ENCODE measurements at regions of chr2 and their contacts with region 1.

Region 1: DNA sequence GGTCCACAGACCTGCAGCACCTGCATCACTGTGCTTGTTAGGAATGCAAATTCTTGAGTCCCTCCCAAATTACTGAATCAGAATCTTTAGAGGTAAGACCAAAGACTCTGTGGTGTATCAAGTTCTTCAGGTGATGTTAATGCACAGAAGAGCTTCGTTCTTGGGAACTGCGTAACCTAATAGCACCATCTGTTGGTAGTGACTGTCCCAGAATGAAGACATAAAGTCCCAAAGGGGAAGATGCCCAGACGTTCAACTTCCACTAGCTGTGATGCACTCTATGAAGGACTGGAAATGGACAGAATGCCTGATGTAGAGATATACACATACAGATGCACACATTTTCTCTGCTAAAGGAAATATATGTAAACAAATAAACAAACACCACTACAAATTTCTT is 576.0 kb downstream of the LRP1B start:
- DNase-seq: peak; percentile 69
- ATAC-seq: peak; percentile 63
- H3K4me3 ChIP-seq: no peak overlapping the region
- H3K27ac ChIP-seq: no peak overlapping the region
- H3K4me1 ChIP-seq: peaks cover 12% of the 10 kb centered on the region
- H3K27me3 ChIP-seq: no peaks in the 10 kb centered on the region
- CTCF ChIP-seq: peak; percentile 79

Region 2: DNA sequence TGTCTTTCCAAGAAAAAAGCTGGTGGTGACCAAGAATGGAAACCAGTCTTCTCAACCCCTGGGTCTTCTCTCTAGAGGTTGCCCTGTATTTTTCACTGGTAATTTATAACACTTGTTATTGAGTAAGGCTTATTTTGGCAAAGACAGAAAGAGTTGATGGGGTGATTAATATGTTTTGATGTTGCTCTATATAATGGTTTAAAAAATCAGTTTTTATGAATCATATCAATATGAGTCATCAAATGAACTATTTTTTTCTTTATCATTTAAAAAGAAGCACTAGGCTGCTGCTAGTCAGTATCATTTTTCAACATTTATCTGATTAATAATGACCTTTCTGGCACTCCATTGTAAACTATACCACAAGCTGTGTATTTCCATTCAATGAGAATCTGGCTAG is 566.2 kb before region 1 on chr2:
- CTCF ChIA-PET with region 1: no interaction called
- POLR2A ChIA-PET with region 1: no interaction called
- intact Hi-C with region 1: loop called (anchors 10 kb)
- DNase-seq: peak; percentile 6
- ATAC-seq: no peak
- H3K4me3 ChIP-seq: no peak overlapping the region
- H3K27ac ChIP-seq: no peak overlapping the region
- H3K4me1 ChIP-seq: 0 out of 2 replicates have a peak, but pooled peaks cover 6% of the 10 kb centered on the region
- H3K27me3 ChIP-seq: no peaks in the 10 kb centered on the region
- CTCF ChIP-seq: no peak

Region 3: DNA sequence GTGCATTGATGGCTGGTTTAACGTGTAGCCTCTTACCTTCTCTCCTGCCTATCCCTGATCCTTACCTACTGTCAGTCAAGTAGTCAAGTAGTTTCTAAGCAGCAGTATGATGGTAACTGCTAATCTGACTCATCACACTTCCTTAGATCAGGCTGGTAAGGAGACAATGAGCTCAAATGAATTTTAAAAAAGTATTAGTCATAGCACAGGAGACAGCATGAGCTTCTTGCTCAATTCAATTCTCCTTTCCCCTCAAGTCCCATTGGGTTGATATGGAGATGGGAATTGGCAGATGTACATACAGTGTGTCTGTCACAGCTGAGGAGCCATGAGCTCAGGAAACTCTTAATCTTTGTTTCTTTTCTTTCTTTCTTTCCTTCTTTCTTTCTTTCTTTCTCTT is 223.7 kb before region 1 on chr2:
- CTCF ChIA-PET with region 1: no interaction called
- POLR2A ChIA-PET with region 1: no interaction called
- intact Hi-C with region 1: loop called (anchors 10 kb)
- DNase-seq: peak; percentile 78
- ATAC-seq: peak; percentile 94
- H3K4me3 ChIP-seq: no peak overlapping the region
- H3K27ac ChIP-seq: no peak overlapping the region
- H3K4me1 ChIP-seq: peaks cover 20% of the 10 kb centered on the region
- H3K27me3 ChIP-seq: no peaks in the 10 kb centered on the region
- CTCF ChIP-seq: no peak

Region 4: DNA sequence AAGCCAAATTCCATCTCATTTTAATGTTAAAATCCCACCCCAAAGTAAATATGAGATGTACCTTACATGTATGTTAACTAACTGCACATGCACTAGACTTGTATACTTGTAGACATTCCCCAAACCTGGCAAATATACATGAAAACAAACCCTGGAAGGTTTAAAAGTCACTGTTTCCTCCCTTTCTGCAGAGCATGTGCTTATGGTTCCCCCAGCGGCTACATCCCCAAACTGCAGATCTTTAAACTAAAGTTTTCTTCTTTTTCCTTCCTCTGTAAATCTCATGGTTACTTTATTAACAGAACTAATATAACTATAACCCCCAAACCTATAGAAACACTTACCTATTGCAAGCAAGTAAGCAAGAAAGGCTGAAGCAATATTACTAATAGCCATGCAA is 155.5 kb before region 1 on chr2:
- CTCF ChIA-PET with region 1: no interaction called
- POLR2A ChIA-PET with region 1: no interaction called
- intact Hi-C with region 1: loop called (anchors 1 kb)
- DNase-seq: peak; percentile 57
- ATAC-seq: no peak
- H3K4me3 ChIP-seq: no peak overlapping the region
- H3K27ac ChIP-seq: no peak overlapping the region
- H3K4me1 ChIP-seq: no peaks in the 10 kb centered on the region
- H3K27me3 ChIP-seq: no peaks in the 10 kb centered on the region
- CTCF ChIP-seq: peak; percentile 82

Region 5: GRCh38 chr2:141595316-141595920 is 40.6 kb after region 1 on chr2:
- CTCF ChIA-PET with region 1: no interaction called
- POLR2A ChIA-PET with region 1: no interaction called
- intact Hi-C with region 1: no loop called
- DNase-seq: no peak
- ATAC-seq: peak; percentile 61; the same call in 1 of the 2 replicates
- H3K4me3 ChIP-seq: no peak overlapping the region
- H3K27ac ChIP-seq: no peak overlapping the region
- H3K4me1 ChIP-seq: no peaks in the 10 kb centered on the region
- H3K27me3 ChIP-seq: no peaks in the 10 kb centered on the region
- CTCF ChIP-seq: no peak

Region 6: DNA sequence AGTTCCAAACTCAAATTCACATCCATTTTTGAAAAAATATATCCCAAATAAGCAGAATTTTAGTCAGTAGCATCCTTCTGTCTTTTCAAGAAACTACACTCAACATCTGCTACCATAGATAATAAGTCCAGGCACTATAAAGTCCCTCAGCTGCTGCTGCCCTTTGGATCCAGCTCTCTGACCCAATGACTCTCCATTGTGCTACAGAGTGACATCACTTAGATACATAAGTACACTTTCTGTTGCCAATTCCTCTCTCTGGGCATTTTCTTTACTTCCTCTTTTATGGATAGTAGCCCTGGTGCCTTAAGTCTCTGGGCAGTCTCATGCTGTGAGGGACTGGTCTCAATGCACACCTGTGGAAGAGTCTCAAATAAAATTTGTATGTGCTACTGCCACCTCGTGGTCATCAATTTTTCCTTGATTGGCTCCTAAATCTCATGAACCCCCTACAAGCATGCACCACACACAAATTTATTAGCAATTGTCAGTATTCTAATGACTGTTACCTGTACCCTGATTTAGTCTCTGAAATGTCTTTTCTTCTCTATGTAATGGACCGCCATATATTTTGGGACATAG is 356.8 kb after region 1 on chr2:
- CTCF ChIA-PET with region 1: no interaction called
- POLR2A ChIA-PET with region 1: no interaction called
- intact Hi-C with region 1: loop called (anchors 2 kb)
- DNase-seq: peak; percentile 78
- ATAC-seq: peak; percentile 87
- H3K4me3 ChIP-seq: no peak overlapping the region
- H3K27ac ChIP-seq: no peak overlapping the region
- H3K4me1 ChIP-seq: no peaks in the 10 kb centered on the region
- H3K27me3 ChIP-seq: no peaks in the 10 kb centered on the region
- CTCF ChIP-seq: peak; percentile 67

Region 7: GRCh38 chr2:142140434-142140845 is 585.6 kb after region 1 on chr2:
- CTCF ChIA-PET with region 1: interaction called, 6 read pairs
- POLR2A ChIA-PET with region 1: no interaction called
- intact Hi-C with region 1: loop called (anchors 2 kb)
- DNase-seq: peak; percentile 65
- ATAC-seq: 0 out of 2 replicates have a peak, but pooled peaks have one; percentile 37
- H3K4me3 ChIP-seq: no peak overlapping the region
- H3K27ac ChIP-seq: no peak overlapping the region
- H3K4me1 ChIP-seq: no peaks in the 10 kb centered on the region
- H3K27me3 ChIP-seq: no peaks in the 10 kb centered on the region
- CTCF ChIP-seq: peak; percentile 69

Region 8: DNA sequence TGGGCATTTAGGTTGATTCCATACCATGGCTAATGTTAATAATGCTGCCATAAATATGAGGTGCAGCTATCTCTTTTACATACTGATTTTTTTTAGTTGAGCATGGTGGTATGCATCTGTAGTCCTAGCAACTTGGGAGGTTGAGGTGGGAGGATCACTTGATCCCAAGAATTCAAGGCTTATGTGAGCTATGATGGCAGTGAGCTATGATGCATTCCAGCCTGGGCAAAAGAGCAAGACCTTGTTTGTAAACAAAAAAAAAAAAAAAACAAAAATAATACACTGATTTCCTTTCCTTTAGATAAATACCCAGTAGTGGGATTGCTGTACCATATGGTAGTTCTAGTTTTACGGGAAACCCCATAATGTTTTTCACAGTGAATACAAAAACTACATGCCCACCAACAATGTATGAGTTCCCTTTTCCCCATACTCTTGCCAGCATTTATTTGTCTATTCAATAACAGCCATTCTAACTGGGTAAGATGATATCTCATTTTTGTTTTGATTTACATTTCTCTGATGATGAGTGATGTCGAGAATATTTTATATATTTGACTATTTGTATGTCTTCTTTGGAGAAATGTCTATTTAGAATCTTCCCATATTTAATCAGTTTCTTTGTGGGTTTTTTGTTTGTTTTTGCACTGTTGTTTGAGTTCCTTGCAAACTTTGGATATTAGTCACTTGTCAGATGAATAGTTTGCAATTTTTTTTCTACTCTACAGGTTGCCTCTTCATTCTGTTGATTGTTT is 1041.7 kb after region 1 on chr2:
- CTCF ChIA-PET with region 1: no interaction called
- POLR2A ChIA-PET with region 1: no interaction called
- intact Hi-C with region 1: loop called (anchors 5 kb)
- DNase-seq: peak; percentile 90
- ATAC-seq: peak; percentile 82
- H3K4me3 ChIP-seq: no peak overlapping the region
- H3K27ac ChIP-seq: peak overlapping the region; percentile 42
- H3K4me1 ChIP-seq: peaks cover 48% of the 10 kb centered on the region
- H3K27me3 ChIP-seq: no peaks in the 10 kb centered on the region
- CTCF ChIP-seq: no peak

Measured in PC-3 (cell line).